Activated CD4-positive, alpha-beta memory T cell treated with anti-CD3 and anti-CD28 coated beads for 36 hours (primary cell): ENCODE measurements at regions of chr15 and their contacts with region 1.

Region 1: DNA sequence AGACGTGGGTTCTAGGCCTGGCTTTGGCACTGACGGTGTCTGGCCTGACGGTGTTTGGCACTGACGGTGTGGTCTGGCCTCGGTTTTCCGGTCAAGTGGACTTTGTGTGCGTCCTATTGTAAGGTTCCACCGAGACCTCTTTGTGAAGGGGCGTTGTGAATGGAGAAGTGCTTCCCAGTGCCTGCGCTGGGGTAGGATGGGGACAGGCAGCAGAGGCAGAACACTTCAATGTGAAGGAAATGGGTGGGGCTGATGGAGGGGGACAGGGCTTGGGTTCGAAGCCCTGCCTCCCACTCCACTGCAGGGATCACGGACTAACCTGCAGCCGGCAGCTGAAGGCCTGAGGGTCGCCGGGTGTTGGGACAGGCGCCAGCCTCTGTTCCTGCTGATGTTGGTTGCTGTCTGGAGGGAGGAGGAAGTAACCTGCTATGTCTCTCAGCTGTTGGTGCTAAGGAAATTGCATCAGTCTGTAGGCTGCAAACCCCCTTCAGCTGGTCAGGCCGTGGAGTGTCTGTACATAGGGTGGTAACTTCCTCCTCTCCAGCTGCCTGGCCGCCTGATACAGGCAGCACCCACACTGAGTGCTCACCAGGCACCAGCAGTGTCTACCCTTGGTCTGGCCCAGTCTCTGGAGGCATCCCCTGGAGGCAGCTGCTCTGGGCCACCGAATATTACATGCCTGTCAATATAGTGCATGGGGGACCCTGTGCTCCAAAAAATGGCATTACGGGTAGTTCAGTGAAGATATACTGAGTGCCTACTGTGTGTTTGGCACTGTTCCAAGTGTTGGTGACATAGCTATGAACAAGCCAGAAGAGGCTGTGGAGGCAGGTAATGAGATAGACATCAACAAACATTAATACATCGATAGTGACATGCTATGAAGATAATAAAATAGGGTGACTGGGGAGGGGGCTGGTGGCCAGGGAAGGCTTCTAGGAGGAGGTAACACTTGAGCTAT is 1.1 kb downstream of the TM6SF1 start:
- DNase-seq: peak; percentile 31
- H3K4me3 Mint-ChIP-seq: peak overlapping the region; percentile 73
- H3K27ac Mint-ChIP-seq: no peak overlapping the region
- H3K4me1 Mint-ChIP-seq: peaks cover 11% of the 10 kb centered on the region
- H3K27me3 Mint-ChIP-seq: peaks cover 49% of the 10 kb centered on the region

Region 2: GRCh38 chr15:83066734-83067637 is 41.6 kb before region 1 on chr15 and contains the start of gene BTBD1:
- CTCF ChIA-PET with region 1: no interaction called
- POLR2A ChIA-PET with region 1: no interaction called
- intact Hi-C with region 1: loop called (anchors 5 kb)
- DNase-seq: peak; percentile 96
- H3K4me3 Mint-ChIP-seq: peak within 1 kb of the TSS; percentile 86
- H3K27ac Mint-ChIP-seq: peak within 1 kb of the TSS; percentile 85
- H3K4me1 Mint-ChIP-seq: peaks cover 27% of the 10 kb centered on the region
- H3K27me3 Mint-ChIP-seq: no peaks in the 10 kb centered on the region
- total RNA-seq, gene BTBD1: 52.9 to 53.3 TPM

Region 3: GRCh38 chr15:83170474-83171165 is 62.1 kb after region 1 on chr15:
- CTCF ChIA-PET with region 1: no interaction called
- POLR2A ChIA-PET with region 1: no interaction called
- intact Hi-C with region 1: no loop called
- DNase-seq: no peak
- H3K4me3 Mint-ChIP-seq: no peak overlapping the region
- H3K27ac Mint-ChIP-seq: no peak overlapping the region
- H3K4me1 Mint-ChIP-seq: no peaks in the 10 kb centered on the region
- H3K27me3 Mint-ChIP-seq: peaks cover 15% of the 10 kb centered on the region

Region 4: GRCh38 chr15:83210614-83211013 is 102.1 kb after region 1 on chr15:
- CTCF ChIA-PET with region 1: no interaction called
- POLR2A ChIA-PET with region 1: no interaction called
- intact Hi-C with region 1: no loop called
- DNase-seq: no peak
- H3K4me3 Mint-ChIP-seq: no peak overlapping the region
- H3K27ac Mint-ChIP-seq: no peak overlapping the region
- H3K4me1 Mint-ChIP-seq: peaks cover 4% of the 10 kb centered on the region
- H3K27me3 Mint-ChIP-seq: peaks cover 16% of the 10 kb centered on the region